ENCODE measurements at regions of chr6 and their contacts with region 1.

Region 1: DNA sequence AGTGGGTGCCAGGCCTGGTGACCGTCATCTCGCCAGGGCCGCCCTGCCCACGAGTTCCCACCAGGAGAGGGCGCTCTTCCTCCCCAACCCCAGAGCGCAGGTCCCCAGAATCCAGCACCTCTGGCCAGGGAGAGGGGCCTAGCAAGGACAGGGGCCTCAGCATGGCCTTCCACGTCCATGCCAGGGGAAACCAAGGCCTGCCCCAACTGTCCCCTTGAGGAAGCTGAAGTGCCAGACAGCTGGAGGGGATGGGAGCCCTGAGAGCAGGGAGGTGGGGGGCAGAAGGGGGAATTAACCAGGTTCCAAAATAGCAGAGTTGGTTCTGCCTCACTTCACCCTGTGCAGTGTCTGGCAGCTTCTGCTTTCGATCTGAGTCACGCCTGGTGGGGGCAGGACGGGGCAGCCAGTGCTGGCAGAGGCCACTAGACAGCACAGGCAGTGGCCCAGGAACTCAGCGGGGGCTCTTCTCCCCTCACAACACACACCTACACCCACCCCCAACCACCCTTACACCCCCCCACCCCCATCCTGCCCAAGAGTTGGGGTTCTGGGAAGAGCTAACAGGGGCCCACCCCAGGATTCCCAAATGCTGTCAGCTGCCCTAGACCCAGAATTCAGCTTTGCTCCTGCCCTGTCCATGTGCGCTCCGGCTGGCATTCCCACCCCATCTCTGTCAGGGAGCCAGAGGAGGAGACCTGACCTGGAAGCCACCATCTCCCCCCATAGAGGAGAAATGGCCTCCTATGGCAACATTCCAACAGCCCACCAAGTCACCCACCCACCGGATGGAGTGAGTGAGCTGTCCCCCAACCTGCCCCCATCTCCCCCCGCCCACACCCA is 29.2 kb downstream of the TFEB start:
- DNase-seq: peak; percentile 81
- ATAC-seq: peak; percentile 91
- H3K4me3 Mint-ChIP-seq: no peak overlapping the region
- H3K27ac Mint-ChIP-seq: no peak overlapping the region
- H3K4me1 Mint-ChIP-seq: peaks cover 6% of the 10 kb centered on the region
- H3K27me3 Mint-ChIP-seq: no peaks in the 10 kb centered on the region
- CTCF ChIP-seq: peak; percentile 90

Region 2: DNA sequence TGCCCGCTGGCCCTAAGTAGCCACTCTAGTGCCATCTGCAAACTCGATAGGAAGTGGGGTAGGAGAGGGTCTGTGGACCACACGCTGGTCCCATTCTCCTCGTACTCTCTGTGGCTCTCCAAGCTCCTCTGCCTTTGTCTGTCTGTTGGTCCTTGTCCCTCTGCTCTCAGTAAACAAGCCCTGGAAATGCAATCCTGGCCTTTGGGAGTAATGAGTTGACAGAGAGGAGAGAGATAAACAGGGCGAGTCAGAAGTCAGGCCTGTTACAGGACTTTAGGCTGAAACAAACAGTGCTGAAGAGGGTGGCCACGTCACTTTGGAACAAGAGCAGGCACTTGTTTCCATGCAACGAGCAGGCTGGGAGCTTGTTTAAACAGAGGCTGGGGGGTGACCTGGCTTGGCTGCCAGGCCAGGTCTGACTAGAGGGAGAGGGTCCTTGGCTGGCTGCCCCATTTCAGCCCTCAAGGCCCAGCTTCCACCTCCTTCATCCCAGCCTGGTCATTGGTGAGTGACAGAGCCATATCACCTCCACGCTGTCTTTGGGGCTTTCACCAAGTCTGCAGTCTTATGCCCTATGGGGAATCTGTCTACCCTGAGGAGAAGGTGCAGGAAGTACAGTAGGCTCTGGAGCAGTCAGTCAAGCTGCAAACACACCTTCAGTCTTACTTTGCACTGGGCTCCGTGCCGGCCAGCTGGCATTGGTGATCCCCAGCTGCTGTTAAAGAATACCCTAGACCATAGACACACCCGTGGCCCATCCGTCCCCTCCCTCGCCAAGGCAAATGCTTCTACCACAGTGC is 137.4 kb before region 1 on chr6:
- CTCF ChIA-PET with region 1: no interaction called
- POLR2A ChIA-PET with region 1: no interaction called
- DNase-seq: peak; percentile 10
- ATAC-seq: no peak
- H3K4me3 Mint-ChIP-seq: no peak overlapping the region
- H3K27ac Mint-ChIP-seq: no peak overlapping the region
- H3K4me1 Mint-ChIP-seq: peaks cover 61% of the 10 kb centered on the region
- H3K27me3 Mint-ChIP-seq: no peaks in the 10 kb centered on the region; the same call in 1 of the 2 replicates
- CTCF ChIP-seq: no peak

Region 3: DNA sequence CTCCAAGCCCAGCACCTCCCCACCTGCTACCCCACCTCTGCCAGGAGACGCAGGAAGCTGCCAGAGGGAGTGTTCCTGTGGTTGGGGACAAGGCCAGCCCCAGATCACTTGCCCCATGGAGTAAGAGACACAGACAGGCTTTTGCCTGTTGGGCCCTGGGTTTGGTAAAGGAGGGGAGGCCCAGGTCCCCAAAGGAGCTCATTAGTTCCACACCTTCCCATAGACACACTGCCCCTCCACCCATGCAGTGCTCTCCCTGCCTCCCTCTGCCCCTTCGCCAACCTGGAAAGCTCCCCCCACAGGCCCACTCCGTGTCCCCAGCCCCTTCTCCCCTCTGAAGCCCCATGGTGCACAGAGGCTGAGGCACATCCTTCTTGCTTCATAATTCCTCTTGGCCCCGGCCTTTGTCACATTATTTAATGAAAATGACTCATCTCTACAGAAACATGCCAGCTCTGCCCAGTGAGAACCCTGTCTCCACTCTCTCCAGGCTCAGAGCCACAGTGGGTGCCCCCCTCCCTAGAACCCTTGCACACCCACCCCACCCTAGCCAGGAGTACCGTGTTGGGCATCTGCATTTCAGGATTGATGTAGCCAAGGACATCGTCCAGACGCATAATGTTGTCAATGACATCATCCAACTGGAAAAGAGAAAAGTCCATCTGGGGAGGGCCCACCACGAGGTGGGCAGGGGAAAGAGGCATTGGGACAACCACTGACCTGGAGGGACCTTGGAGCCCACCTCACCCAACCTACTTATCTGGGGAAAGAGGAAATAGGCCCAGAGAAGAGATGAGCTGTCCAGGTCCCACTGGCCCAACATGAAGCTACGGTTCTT is 16.8 kb before region 1 on chr6:
- CTCF ChIA-PET with region 1: interaction called, 24 read pairs
- POLR2A ChIA-PET with region 1: no interaction called
- DNase-seq: peak; percentile 4
- ATAC-seq: no peak
- H3K4me3 Mint-ChIP-seq: no peak overlapping the region
- H3K27ac Mint-ChIP-seq: no peak overlapping the region
- H3K4me1 Mint-ChIP-seq: peaks cover 19% of the 10 kb centered on the region
- H3K27me3 Mint-ChIP-seq: peaks cover 6% of the 10 kb centered on the region
- CTCF ChIP-seq: no peak

Region 4: GRCh38 chr6:41694815-41695526 is 11.2 kb before region 1 on chr6:
- CTCF ChIA-PET with region 1: interaction called, 24 read pairs
- POLR2A ChIA-PET with region 1: no interaction called
- DNase-seq: no peak
- ATAC-seq: no peak; the same call in 1 of the 2 replicates
- H3K4me3 Mint-ChIP-seq: no peak overlapping the region
- H3K27ac Mint-ChIP-seq: no peak overlapping the region
- H3K4me1 Mint-ChIP-seq: peaks cover 2% of the 10 kb centered on the region; the same call in 1 of the 2 replicates
- H3K27me3 Mint-ChIP-seq: no peaks in the 10 kb centered on the region; the same call in 1 of the 2 replicates
- CTCF ChIP-seq: no peak

Region 5: DNA sequence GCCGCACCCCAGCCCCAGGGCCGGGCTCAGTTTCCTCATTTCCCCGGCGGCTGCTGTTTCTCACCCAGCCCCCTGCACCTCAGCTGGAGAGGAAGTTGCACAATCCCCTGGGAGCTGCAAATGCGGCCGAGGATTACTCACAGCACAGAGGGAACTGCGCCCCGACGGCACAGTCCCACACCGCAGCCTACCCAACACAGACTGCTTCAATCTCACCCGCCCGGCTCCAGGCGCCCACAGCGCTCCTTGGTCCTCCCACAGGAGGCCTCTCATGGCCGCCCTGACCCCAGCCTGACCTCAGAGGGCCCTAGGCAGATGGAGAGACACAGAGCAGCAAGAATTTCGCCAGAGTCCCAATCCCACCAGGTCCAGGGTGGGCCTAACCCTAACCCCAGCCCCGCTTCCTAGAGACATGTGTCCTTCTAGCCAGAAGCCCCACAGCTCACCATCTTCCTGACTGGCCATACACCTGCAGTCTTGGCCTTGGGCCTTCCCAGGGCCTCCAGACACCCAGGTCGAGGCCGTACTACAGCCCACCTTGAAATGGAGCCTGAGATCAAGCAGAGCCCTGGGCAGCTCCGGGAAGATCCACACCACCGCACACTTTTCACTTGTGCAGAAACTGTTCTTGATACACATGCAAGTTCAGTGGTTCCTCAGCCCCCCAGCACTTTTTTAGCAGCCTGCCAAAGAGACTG is 17.5 kb after region 1 on chr6:
- CTCF ChIA-PET with region 1: interaction called, 39 read pairs
- POLR2A ChIA-PET with region 1: no interaction called
- DNase-seq: peak; percentile 36
- ATAC-seq: peak; percentile 86
- H3K4me3 Mint-ChIP-seq: no peak overlapping the region
- H3K27ac Mint-ChIP-seq: peak overlapping the region; percentile 60; the same call in 1 of the 2 replicates
- H3K4me1 Mint-ChIP-seq: peaks cover 23% of the 10 kb centered on the region
- H3K27me3 Mint-ChIP-seq: no peaks in the 10 kb centered on the region
- CTCF ChIP-seq: no peak

Region 6: GRCh38 chr6:41735427-41736356 is 29.5 kb after region 1 on chr6 and contains the start of gene TFEB:
- CTCF ChIA-PET with region 1: interaction called, 37 read pairs
- POLR2A ChIA-PET with region 1: interaction called, 4 read pairs
- DNase-seq: peak; percentile 94
- ATAC-seq: peak; percentile 52
- H3K4me3 Mint-ChIP-seq: peak within 1 kb of the TSS; percentile 67
- H3K27ac Mint-ChIP-seq: 0 out of 2 replicates have a peak within 1 kb of the TSS, but pooled peaks have one; percentile 63
- H3K4me1 Mint-ChIP-seq: peaks cover 27% of the 10 kb centered on the region
- H3K27me3 Mint-ChIP-seq: peaks cover 18% of the 10 kb centered on the region
- CTCF ChIP-seq: peak; percentile 72
- total RNA-seq, gene TFEB: 3.1 to 3.9 TPM (median 3.3 TPM) in 3 replicates

Region 7: DNA sequence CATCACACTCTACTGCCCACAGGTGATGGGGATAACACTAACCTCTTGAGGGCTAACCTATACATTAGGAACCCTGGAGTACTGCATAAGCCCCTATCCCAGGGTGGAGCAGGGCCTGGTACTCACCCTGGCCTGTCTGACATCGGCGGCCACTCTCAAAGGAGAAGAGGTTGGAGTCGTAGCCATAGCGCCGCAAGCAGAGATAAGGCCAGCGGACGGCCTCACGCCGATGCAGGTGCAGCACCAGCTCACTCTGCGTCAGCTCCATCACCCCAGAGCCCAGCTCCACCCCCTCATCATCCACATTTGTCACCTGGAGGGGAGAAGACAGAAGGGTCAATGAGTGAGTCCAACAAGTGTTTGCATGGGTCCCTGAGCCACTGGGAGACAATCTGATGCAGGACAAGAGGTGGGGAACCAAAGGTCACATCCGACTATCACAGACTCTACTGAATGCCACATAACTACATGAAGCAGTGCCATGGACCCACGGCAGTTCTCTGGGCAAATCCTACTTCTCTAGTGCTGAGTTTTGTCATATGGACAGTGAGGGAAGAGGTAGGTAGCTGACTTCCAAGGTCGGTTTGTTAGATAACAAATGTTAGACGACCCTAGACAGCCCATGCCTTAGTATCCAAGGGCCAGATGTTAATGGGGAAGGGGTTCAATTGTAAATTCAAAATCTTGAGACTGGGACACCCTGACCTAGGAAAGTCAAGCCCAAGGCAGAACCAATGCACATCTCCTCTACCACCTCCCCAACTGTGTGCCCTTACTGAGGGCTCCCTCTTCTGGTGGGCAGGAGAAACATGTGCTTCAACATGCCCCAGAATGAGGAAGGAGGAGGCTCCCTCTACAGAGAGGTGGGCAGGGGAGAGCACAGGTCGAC is 69.3 kb after region 1 on chr6:
- CTCF ChIA-PET with region 1: interaction called, 19 read pairs
- POLR2A ChIA-PET with region 1: no interaction called
- DNase-seq: peak; percentile 52
- ATAC-seq: peak; percentile 59
- H3K4me3 Mint-ChIP-seq: no peak overlapping the region
- H3K27ac Mint-ChIP-seq: no peak overlapping the region
- H3K4me1 Mint-ChIP-seq: peaks cover 6% of the 10 kb centered on the region
- H3K27me3 Mint-ChIP-seq: no peaks in the 10 kb centered on the region
- CTCF ChIP-seq: peak; percentile 57; the same call in 1 of the 2 replicates

Measured in WTC11 (cell line).